Breast epithelium (tissue), 4 donors: ENCODE measurements at regions of chr15 and their contacts with region 1.

Region 1: DNA sequence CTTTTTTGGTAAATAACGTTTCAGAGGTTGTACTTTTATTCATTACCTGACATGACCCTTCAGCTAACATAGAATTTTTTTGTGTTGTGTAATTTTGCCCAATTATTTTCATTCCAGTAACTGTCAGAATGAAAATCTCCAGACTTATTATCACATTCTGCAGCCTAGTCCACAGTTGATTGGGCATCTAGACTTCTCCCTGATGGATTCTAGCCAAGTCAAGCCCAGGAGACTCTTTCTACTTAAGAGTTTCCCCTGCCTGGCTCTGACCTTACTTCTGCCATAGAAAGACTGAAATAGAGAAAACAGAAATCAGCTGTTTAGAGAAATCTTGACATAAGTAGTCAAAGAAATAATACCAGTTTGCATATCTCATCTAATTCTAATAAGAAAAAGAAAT is 82.9 kb upstream of the CDAN1 start:
- DNase-seq: no peak
- H3K4me3 ChIP-seq: no peak overlapping the region
- H3K27ac ChIP-seq: no peak overlapping the region
- H3K4me1 ChIP-seq: no peaks in the 10 kb centered on the region
- H3K27me3 ChIP-seq: no peaks in the 10 kb centered on the region
- CTCF ChIP-seq: no peak
- POLR2A ChIP-seq: no peak

Region 2: GRCh38 chr15:41713047-41713446 is 1106.7 kb before region 1 on chr15:
- intact Hi-C with region 1: loop called (anchors 5 kb)
- DNase-seq: no peak
- H3K4me3 ChIP-seq: no peak overlapping the region
- H3K27ac ChIP-seq: no peak overlapping the region
- H3K4me1 ChIP-seq: no peaks in the 10 kb centered on the region
- H3K27me3 ChIP-seq: no peaks in the 10 kb centered on the region
- CTCF ChIP-seq: no peak
- POLR2A ChIP-seq: no peak

Region 3: GRCh38 chr15:42444415-42445063 is 375.2 kb before region 1 on chr15:
- intact Hi-C with region 1: no loop called
- DNase-seq: no peak
- H3K4me3 ChIP-seq: no peak overlapping the region
- H3K27ac ChIP-seq: peak overlapping the region in 1 of 2 donors; percentile 25
- H3K4me1 ChIP-seq: no peaks in the 10 kb centered on the region
- H3K27me3 ChIP-seq: no peaks in the 10 kb centered on the region
- CTCF ChIP-seq: no peak
- POLR2A ChIP-seq: no peak